BJ (cell line): ENCODE measurements at regions of chr1 and their contacts with region 1.

Region 1: DNA sequence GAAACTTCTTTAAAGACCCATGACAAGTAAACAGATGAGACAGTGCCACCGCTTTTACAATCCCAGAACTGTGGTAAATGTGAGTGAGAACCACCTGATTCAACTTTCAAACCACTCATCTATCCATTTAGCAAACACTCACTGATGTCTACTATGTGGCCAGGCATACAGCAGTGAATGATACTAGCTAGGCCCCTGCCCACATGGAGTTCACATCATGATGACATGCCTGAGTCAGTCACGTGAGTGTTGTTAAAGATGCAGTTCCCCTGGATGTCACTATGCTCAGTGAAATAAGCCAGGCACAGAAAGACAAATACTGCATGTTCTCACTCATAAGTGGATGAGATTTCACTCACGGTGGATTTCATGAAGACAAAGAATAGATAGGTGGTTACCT is 28.4 kb downstream of the STX6 start:
- DNase-seq: no peak
- H3K4me3 ChIP-seq: no peak overlapping the region
- H3K27me3 ChIP-seq: no peaks in the 10 kb centered on the region
- CTCF ChIP-seq: no peak

Region 2: GRCh38 chr1:180976191-180976590 is 18.1 kb before region 1 on chr1:
- CTCF ChIA-PET with region 1: no interaction called
- POLR2A ChIA-PET with region 1: interaction called, 13 read pairs
- DNase-seq: no peak
- H3K4me3 ChIP-seq: no peak overlapping the region
- H3K27me3 ChIP-seq: no peaks in the 10 kb centered on the region
- CTCF ChIP-seq: no peak